Tibial artery (tissue), 4 donors: ENCODE measurements at regions of chr4 and their contacts with region 1.

Region 1: GRCh38 chr4:6873792-6874461 is 35.7 kb upstream of the TBC1D14 start:
- DNase-seq: peak; percentile 74 to 80
- H3K4me3 ChIP-seq: no peak overlapping the region
- H3K27ac ChIP-seq: no peak overlapping the region
- H3K4me1 ChIP-seq: no peaks in the 10 kb centered on the region
- H3K27me3 ChIP-seq: no peaks in the 10 kb centered on the region
- CTCF ChIP-seq: peak; percentile 78 to 79

Region 2: DNA sequence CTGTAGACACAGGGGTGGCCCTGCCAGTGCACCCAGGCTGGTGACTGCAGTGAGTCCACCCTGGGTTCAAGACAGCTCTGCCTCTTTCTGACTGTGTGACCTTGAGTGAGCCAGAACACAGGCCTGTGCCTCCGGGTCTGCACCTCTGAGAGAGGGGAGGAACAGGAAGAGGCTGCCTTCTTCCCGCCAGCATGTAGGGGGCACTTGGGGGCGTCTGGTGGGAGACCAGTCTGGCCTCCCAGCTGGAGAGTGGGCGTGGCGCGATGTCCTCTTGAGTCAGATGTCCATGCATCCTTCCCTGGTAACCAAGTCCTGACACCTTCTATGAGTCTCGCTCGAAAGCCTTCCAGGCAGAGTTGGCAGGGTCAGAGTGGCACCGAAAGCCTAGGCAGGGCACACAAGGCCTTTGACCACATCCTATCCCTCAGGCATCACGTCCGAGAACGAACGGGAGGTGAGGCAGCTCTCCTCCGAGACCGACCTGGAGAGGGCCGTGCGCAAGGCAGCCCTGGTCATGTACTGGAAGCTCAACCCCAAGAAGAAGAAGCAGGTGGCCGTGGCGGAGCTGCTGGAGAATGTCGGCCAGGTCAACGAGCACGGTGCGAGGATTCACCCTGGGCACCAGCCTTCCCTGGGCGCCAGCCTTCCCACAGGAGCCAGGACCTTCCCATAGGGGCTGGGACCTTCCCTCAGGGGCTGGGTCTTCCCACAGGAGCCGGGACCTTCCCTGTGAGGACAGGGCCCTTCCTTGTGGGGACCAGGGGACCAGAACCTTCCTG is 583.0 kb before region 1 on chr4:
- intact Hi-C with region 1: no loop called
- DNase-seq: no peak
- H3K4me3 ChIP-seq: no peak overlapping the region
- H3K27ac ChIP-seq: no peak overlapping the region
- H3K4me1 ChIP-seq: no peaks in the 10 kb centered on the region
- H3K27me3 ChIP-seq: no peaks in the 10 kb centered on the region
- CTCF ChIP-seq: no peak

Region 3: DNA sequence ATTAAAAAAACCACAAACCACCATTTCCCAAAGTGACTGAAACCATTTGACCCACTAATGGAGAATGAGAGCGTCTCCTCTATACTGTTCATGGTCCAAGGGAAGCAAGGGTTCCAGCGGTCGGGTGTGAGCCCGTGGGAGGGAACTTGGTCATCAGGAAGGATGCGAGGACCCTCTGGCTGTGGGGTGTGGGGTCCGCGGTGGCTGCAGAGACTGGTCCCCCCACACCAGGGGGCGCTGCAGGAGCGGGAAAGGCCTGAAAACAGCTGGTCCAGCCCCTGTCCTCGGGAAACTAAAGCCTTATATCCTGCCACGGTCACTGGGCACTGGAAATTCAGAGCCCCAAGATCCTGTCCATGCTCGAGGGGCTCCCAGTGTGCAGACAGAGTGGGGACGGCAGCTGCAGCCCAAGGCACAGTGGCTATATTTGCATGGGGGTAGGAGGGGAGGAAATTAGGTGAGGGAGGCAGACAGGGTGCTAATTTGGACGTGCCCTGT is 153.7 kb before region 1 on chr4:
- intact Hi-C with region 1: loop called (anchors 5 kb)
- DNase-seq: peak; percentile 65 to 89
- H3K4me3 ChIP-seq: no peak overlapping the region
- H3K27ac ChIP-seq: peak overlapping the region in 1 of 2 donors; percentile 16
- H3K4me1 ChIP-seq: peaks cover 0 to 34% (median 24%) of the 10 kb centered on the region in 4 donors
- H3K27me3 ChIP-seq: no peaks in the 10 kb centered on the region
- CTCF ChIP-seq: peak; percentile 91 to 98